Cardiac septum (tissue), 1 donor: ENCODE measurements at regions of chr1 and their contacts with region 1.

Region 1: GRCh38 chr1:201739492-201740085 is 89.4 kb upstream of the IPO9 start:
- DNase-seq: peak; percentile 81

Region 2: DNA sequence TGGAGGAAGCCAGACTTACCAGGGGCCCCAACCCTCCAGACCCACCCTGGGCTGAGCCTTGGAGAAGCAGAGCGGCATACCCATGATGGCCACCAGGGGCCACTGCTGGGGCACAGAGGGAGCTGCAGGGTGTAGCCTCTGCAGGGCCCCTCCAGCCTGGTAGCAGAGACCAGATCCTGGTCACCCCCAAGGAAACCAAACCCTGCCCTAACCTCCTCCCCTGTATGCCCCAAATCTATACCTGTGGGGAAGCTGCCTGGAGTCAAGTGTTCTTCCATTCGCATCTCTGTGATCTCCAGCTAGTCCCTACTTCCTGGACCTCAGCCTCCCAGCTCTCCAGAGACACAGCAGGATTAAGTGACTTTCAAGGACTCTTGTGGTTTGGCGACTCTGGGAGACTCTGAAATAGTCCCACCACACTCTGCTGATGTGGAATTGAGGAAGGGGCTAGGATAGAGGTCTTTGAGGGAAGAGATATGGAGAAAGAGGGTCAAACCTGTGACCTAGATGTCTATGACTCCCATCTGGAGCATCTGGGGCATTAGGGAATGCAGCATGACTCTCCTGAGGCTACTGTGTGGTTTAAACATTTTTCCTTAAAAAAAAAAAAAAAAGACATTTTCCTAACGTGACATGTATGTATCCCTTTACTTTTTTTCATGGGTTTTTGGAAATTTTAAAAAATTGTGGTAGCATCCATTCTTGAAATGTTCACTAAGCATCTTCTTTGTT is 29.9 kb before region 1 on chr1:
- intact Hi-C with region 1: loop called (anchors 2 kb)
- DNase-seq: peak; percentile 84

Region 3: GRCh38 chr1:201786824-201787223 is 47.2 kb after region 1 on chr1:
- intact Hi-C with region 1: loop called (anchors 5 kb)
- DNase-seq: no peak